Tibial artery (tissue), 4 donors: ENCODE measurements at regions of chr18 and their contacts with region 1.

Region 1: GRCh38 chr18:2571200-2572143 is at the starts of genes METTL4 and NDC80:
- DNase-seq: peak; percentile 66 to 88
- H3K4me3 ChIP-seq: peak within 1 kb of the TSS; percentile 65 to 75
- H3K27ac ChIP-seq: peak within 1 kb of the TSS; percentile 97
- H3K4me1 ChIP-seq: peaks cover 0 to 24% (median 17%) of the 10 kb centered on the region in 4 donors
- H3K27me3 ChIP-seq: no peaks in the 10 kb centered on the region
- CTCF ChIP-seq: no peak

Region 2: DNA sequence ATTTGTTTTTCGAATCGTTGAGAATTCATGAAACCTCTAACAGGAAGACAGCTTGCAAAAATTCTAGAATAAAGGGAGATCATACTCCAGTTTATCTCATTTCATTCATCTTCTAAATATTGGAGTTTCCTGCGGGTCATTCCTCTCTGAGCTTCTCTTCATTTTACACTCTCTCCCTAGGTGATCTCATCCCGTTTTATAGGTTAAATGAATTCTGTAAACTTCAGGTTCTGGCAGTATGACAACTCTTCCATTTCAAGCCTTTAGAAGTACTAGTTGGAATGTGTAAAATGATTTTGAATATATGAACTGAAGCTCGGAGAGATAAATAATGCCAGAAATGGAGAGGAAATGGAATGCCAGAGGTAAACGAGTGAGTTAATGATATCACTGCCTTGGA is 312.5 kb before region 1 on chr18:
- intact Hi-C with region 1: no loop called
- DNase-seq: no peak
- H3K4me3 ChIP-seq: no peak overlapping the region
- H3K27ac ChIP-seq: no peak overlapping the region
- H3K4me1 ChIP-seq: no peaks in the 10 kb centered on the region
- H3K27me3 ChIP-seq: no peaks in the 10 kb centered on the region
- CTCF ChIP-seq: no peak

Region 3: GRCh38 chr18:2654928-2655177 is 83.4 kb after region 1 on chr18:
- intact Hi-C with region 1: loop called (anchors 5 kb)
- DNase-seq: no peak
- H3K4me3 ChIP-seq: peak overlapping the region; percentile 83 to 94
- H3K27ac ChIP-seq: peak overlapping the region; percentile 96 to 98
- H3K4me1 ChIP-seq: peaks cover 0 to 31% (median 13%) of the 10 kb centered on the region in 4 donors
- H3K27me3 ChIP-seq: peaks cover 0 to under 1% of the 10 kb centered on the region in 2 donors
- CTCF ChIP-seq: no peak